ENCODE measurements at regions of chr14 and their contacts with region 1.

Region 1: DNA sequence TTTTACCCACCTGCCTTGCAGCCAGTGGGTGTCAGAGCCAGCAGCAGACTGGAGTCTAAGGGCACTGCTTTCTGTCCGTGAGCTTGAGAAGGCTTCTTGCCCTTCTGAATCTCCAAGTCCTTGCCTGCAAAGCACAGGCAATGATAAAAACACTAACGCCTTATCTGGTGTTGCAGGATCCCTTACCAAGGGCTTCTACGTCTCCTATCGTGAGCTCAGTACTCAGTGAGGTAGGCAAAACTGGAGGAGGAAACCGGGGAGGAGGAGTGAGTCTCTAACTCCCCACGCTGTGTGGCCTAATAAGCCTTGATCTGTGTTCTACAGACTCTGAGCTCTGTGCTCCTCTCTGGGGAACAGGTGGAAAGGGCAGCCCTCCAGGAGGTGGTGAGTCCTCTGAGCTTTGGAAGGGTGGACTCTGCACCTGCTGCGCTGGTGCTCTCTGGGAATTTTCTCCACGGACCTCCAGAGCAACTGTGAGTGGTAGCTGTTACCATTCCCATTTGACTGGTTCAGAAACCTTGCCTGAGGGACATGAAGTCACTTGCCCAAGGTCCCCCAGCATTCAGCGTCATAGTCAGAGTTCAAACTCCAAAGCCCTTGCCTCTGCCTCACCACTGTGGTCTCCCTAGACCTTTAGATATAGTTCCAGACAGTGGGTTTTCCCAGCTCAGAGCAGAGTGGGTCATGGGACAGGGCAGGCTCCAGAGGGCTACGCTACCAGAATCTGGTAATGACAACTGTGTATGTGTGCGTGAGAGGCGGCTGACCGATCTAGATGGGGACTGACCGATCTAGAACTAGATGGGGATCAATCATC is 7.0 kb upstream of the MARK3 start:
- DNase-seq: no peak

Region 2: DNA sequence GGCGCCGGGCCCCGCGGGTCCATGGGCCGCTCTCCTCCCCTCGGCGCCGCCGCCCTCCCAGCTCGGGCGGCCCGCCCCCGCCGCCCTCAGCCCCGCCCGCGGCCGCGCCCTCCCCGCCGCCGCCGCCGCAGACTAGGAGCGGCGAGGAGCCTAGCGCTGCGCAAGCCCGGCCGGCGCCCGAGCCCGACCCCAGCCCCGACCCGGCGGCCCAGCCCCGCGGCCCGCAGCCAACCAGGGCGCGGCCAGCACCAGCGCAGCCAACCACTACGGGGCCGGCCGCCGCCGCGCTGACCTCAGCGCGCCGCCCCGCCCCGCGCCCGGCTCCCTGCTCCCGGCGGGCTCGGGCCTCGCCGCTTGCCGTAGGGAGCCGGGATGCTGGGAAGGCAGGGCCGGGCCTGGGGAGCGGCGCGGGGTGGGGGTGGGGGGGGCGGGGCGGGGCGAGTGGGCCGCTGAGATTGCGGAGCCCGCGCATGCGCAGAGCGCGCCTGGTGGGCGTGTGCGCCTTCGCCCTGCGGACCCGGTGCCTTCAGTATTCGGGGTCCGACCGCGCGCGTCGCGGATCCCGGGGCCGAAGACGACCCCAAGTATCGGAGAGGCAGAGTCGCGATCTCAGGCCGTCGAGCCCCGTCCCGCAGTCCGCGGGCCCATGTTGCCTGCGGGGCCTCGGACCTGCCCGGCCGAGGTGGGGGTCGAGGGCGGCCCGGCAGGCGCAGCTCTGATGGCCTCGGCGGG is 320.7 kb before region 1 on chr14 and contains the start of gene CDC42BPB:
- CTCF ChIA-PET with region 1: no interaction called
- POLR2A ChIA-PET with region 1: no interaction called
- DNase-seq: peak; percentile 94

Region 3: GRCh38 chr14:103391048-103391447 is 12.8 kb after region 1 on chr14:
- CTCF ChIA-PET with region 1: interaction called, 18 read pairs
- POLR2A ChIA-PET with region 1: no interaction called
- DNase-seq: no peak

Region 4: DNA sequence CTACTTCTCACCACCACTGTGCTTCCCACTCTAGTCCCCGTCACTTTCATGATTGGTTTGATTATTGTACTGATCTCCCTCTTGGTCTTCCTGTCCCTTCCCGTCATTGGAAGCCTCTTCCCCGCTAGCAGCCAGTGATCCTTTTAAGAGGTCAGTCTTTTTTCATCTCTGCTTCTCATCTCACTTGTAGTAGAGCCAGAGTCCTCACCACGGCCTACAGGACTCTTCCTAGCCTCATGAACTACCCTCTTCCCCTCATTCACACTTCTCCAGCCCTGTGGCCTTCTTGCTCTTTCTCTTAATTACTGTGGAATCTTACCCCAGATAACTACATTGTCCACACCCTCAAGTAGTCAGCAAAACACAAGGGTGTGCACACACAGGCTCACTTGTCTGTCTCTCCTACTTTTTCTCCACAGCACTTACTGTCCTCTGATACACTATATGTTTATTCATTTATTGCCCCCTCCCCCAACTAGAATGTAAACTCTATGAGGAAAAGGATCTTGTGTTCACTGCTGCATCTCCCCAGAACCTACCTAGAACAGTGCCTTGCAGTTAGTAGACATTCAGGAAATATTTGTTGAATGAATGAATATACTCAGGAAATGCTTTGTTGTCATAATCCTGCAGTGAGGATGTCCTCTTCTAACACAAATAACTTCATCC is 78.1 kb after region 1 on chr14:
- CTCF ChIA-PET with region 1: no interaction called
- POLR2A ChIA-PET with region 1: no interaction called
- DNase-seq: no peak

Measured in HEK293T (cell line).